ENCODE measurements at regions of chr2 and their contacts with region 1.

Region 1: DNA sequence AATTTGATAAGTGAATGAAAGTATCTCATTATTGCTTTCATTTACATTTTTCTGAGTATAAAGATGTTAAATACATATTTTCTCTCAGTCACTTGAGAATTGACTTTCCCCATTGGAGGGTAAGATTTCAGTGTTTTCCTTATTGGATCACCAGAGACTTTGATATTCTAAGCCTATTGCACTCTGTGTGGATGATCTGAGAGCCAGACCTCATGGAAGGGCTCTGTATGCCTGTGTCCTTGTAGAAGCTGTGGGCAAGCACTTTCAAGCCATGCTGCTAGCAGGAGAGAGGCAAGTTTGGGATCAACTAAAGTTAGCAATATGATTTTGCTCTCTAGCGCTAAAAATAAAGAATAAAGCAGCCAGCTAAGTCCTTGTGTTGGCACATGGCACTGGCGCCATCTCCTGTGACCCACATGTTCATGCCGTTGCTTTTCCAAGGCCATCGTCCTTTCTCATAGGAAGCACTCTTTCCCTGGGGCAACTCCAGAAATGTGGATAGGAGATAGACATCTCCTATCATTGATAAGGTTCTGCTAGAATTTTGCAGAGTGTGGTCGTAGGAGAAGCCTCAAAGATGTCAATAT is 72.6 kb downstream of the AOX1 start:
- DNase-seq: peak; percentile 15
- ATAC-seq: peak; percentile 41
- H3K4me3 ChIP-seq: no peak overlapping the region
- H3K27ac ChIP-seq: no peak overlapping the region
- H3K4me1 ChIP-seq: peaks cover 3 to 26% of the 10 kb centered on the region in 2 experiments; a peak in 3 of 4 replicates
- H3K27me3 ChIP-seq: no peaks in the 10 kb centered on the region
- CTCF ChIP-seq: peak; percentile 16 to 36 (median 24); a peak in 2 of 6 replicates
- POLR2A ChIP-seq: no peak
- RAD21 ChIP-seq: peak; percentile 62

Region 2: DNA sequence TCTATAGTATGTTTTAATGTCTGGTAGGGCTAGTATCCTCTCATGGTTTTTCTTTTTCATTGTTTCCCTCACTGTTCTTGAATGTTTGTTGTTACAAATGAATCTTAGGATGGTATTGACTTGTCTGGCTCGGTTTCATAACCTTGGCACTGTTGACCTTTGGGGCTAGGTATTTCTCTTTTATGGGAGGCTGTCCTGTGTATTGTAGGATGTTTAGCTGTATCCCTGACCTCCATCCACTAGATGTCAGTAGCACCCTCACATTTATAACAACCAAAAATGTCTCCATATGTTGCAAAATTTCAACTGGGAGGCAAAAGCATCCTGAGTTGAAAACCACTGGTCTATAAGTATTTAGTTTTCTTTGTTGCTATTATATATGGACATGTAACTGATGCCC is 79.6 kb before region 1 on chr2:
- CTCF ChIA-PET with region 1: no interaction called
- POLR2A ChIA-PET with region 1: no interaction called
- RAD21 ChIA-PET with region 1: no interaction called
- intact Hi-C with region 1: loop called (anchors 5 kb)
- DNase-seq: no peak
- ATAC-seq: peak; percentile 67
- H3K4me3 ChIP-seq: no peak overlapping the region
- H3K27ac ChIP-seq: no peak overlapping the region
- H3K4me1 ChIP-seq: no peaks in the 10 kb centered on the region
- H3K27me3 ChIP-seq: no peaks in the 10 kb centered on the region
- CTCF ChIP-seq: peak; percentile 33 to 62 (median 52); a peak in 5 of 6 replicates
- POLR2A ChIP-seq: no peak
- RAD21 ChIP-seq: peak; percentile 31

Region 3: GRCh38 chr2:200950378-200950777 is 292.0 kb after region 1 on chr2:
- CTCF ChIA-PET with region 1: no interaction called
- POLR2A ChIA-PET with region 1: no interaction called
- RAD21 ChIA-PET with region 1: no interaction called
- intact Hi-C with region 1: no loop called
- DNase-seq: no peak
- ATAC-seq: no peak
- H3K4me3 ChIP-seq: no peak overlapping the region
- H3K27ac ChIP-seq: no peak overlapping the region
- H3K4me1 ChIP-seq: peaks cover 7 to 17% of the 10 kb centered on the region in 2 experiments
- H3K27me3 ChIP-seq: no peaks in the 10 kb centered on the region
- CTCF ChIP-seq: no peak
- POLR2A ChIP-seq: no peak
- RAD21 ChIP-seq: no peak

Measured in HCT116 (cell line).